Lower leg skin (tissue), 4 donors: ENCODE measurements at regions of chr11 and their contacts with region 1.

Region 1: DNA sequence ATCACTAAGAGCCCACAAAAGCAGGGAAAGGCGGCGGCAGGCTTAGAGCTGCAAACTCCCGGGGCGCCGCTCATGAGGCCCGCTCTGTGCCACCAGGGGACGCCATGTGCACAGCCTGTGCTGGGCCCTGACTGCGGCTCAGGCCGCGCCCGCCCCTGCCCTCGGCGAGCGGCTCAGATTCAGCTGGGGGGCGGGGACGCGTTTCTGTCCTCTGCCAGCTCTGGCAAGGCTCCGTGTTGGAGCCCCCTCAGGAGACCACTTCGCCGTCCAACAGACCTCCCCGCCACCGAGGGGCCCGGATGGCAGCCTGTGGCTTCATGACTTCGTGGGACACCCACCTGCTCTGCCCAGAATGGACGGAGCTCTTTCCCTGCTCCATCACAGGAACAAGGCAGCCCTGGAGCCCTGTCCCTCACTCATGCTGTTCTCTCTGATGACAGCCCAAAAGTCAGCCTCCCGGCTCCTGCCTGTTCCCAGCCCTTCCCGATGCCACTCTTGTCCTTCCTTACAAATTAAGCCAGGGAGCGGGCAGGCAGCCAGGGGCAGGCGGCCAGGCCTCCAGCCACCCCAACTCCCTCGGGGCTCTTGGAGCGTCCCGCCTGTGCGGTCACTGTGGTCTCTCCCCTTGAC is 69.1 kb downstream of the NAT10 start:
- DNase-seq: peak; percentile 62 to 96
- H3K4me3 ChIP-seq: no peak overlapping the region
- CTCF ChIP-seq: peak in 1 of 3 donors; percentile 91
- POLR2A ChIP-seq: no peak

Region 2: DNA sequence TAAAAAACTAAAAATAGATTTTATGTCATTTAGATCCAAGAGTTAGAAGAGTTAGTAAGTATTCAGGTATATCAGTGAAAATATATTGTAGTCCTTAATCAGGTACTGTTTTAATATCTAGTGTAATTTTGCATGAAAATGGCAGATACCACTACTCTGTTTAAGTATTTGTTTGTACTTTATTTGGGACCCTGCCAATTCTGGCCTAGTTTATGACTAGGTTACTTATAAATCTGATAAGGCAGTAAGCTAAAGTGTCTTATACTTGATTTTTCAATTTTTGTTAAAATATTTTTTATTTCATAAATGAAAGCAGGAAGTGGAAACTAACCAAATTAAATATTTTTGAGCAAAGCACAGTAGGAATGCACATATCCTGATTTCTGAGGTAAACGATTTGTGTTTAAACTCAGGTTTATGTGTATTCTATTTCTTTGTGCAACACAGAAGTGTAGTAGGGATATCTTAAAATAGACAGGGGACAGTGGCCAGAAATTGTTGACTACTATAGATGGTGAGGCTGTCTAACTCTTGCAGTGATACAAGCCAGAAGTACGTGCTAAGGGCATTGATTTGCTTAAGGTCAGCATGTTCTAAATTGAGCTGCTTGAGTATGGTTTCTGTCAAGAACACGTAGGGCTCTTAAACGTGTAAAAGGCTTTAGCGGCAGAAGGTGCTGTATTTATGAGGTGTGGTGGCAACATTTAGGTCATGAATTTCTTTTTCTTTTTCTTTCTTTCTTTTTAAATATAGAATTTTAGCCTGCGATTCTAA is 883.3 kb before region 1 on chr11:
- intact Hi-C with region 1: no loop called
- DNase-seq: no peak
- H3K4me3 ChIP-seq: no peak overlapping the region
- CTCF ChIP-seq: no peak
- POLR2A ChIP-seq: no peak

Region 3: DNA sequence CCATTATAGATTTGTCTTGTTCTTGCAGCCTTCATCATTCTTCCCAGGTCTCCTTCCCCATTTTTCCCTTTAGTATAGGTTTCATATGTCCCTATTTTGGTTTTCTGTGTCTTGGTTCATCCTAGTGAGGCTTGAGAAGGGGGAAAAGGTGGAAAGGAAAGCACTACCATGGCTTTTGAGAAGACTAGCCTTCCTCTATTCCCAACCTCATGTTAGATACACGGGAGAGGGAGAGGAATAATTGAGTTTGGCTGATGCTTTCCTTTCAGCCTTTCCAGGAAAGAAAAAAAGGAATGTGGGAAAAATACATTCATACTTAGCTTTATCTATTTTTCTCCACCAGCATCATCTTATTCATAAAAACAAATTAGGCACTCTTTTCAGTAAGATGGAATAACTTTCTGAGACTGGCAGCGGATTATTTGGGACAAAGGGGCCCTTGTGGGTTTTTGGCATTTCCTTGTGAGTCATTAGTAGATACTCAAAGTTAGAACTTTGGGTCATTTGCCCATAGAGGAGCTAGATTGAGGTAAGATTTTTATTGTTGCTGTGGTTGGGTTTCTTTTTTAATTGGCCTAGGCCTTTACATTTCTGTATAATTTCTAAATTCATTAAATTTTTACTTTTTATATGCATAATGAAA is 99.2 kb before region 1 on chr11:
- intact Hi-C with region 1: no loop called
- DNase-seq: no peak
- H3K4me3 ChIP-seq: no peak overlapping the region
- CTCF ChIP-seq: no peak
- POLR2A ChIP-seq: no peak

Region 4: GRCh38 chr11:34357701-34358257 is 183.3 kb after region 1 on chr11 and contains the start of gene ABTB2:
- intact Hi-C with region 1: loop called (anchors 2 kb)
- DNase-seq: peak; percentile 97 to 100
- H3K4me3 ChIP-seq: peak within 1 kb of the TSS; percentile 41
- CTCF ChIP-seq: no peak
- POLR2A ChIP-seq: peak in 1 of 2 donors; percentile 54
- total RNA-seq, gene ABTB2: 6.1 to 24.2 (median 11.1) TPM

Region 5: GRCh38 chr11:34492806-34493414 is 318.4 kb after region 1 on chr11:
- intact Hi-C with region 1: loop called (anchors 10 kb)
- DNase-seq: peak; percentile 58 to 91
- H3K4me3 ChIP-seq: no peak overlapping the region
- CTCF ChIP-seq: no peak
- POLR2A ChIP-seq: no peak